Activated naive CD4-positive, alpha-beta T cell treated with anti-CD3 and anti-CD28 coated beads for 36 hours (primary cell): ENCODE measurements at regions of chr13 and their contacts with region 1.

Region 1: DNA sequence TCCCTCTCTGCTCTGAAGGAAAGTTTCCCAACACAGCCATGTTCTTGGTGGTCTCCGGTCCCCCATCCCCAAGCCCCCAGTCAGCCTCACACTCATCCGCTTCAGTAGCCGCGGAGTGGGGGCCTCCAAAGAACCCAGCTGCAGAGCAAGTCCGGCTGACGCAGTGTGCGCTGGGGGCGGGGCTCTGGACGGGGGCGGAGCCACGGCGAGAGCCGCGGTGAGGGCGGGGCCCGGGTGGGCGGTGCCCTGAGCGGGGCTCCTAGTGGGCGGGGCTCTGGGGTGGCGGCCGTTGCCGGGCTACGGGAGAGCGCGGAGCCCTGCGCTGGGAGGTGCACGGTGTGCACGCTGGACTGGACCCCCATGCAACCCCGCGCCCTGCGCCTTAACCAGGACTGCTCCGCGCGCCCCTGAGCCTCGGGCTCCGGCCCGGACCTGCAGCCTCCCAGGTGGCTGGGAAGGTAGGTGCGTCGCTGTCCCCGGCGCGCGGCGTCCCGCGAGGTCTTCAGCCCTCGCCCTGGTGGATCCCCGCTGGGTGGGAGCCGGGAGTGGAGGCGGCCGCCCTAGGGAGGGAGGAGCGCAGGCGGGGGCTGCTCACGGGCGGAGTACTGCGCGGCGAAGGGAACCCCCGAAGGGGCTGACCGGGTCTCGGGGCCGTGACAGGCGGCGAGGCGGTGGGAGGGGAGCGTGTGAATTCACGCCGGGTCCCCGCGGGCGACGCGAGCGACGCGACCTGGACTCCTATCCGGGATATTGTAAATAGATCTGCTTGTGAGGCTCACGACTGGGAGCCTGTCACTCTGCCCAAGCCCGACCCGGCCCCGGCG is 9.1 kb downstream of the TNFRSF19 start:
- DNase-seq: peak; percentile 92
- H3K4me3 Mint-ChIP-seq: peak overlapping the region; percentile 76
- H3K27ac Mint-ChIP-seq: no peak overlapping the region
- H3K4me1 Mint-ChIP-seq: peaks cover 17% of the 10 kb centered on the region
- H3K27me3 Mint-ChIP-seq: peaks cover 38% of the 10 kb centered on the region

Region 2: GRCh38 chr13:23466144-23467002 is 112.9 kb before region 1 on chr13:
- CTCF ChIA-PET with region 1: no interaction called
- intact Hi-C with region 1: loop called (anchors 2 kb)
- DNase-seq: peak; percentile 75
- H3K4me3 Mint-ChIP-seq: peak overlapping the region; percentile 62
- H3K27ac Mint-ChIP-seq: no peak overlapping the region
- H3K4me1 Mint-ChIP-seq: peaks cover 8% of the 10 kb centered on the region
- H3K27me3 Mint-ChIP-seq: no peaks in the 10 kb centered on the region

Region 3: GRCh38 chr13:23695711-23696464 is 116.6 kb after region 1 on chr13:
- CTCF ChIA-PET with region 1: interaction called, 4 read pairs
- intact Hi-C with region 1: loop called (anchors 2 kb)
- DNase-seq: peak; percentile 70
- H3K4me3 Mint-ChIP-seq: peak overlapping the region; percentile 61
- H3K27ac Mint-ChIP-seq: peak overlapping the region; percentile 62
- H3K4me1 Mint-ChIP-seq: peaks cover 10% of the 10 kb centered on the region
- H3K27me3 Mint-ChIP-seq: no peaks in the 10 kb centered on the region

Region 4: DNA sequence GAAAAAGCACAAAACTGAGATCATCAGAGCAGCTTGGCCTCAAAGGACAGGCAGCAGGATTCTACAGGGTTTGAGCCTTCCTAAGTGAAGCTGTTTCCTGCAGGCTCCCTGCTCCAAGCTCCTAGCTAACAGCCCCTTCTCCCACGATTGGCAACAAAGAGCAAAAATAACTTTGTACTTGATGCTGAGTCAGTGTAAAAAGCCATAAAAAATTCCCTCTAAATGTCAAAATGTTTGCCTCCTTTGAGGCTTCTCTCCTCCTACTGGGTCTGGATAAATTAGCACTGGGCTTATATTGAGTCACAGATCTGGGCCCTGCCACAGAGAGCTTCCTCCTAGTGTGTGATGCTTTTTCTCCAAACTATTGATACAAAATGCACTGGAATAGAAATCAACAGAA is 144.2 kb after region 1 on chr13:
- CTCF ChIA-PET with region 1: no interaction called
- intact Hi-C with region 1: no loop called
- DNase-seq: no peak
- H3K4me3 Mint-ChIP-seq: no peak overlapping the region
- H3K27ac Mint-ChIP-seq: no peak overlapping the region
- H3K4me1 Mint-ChIP-seq: peaks cover 10% of the 10 kb centered on the region
- H3K27me3 Mint-ChIP-seq: no peaks in the 10 kb centered on the region

Region 5: DNA sequence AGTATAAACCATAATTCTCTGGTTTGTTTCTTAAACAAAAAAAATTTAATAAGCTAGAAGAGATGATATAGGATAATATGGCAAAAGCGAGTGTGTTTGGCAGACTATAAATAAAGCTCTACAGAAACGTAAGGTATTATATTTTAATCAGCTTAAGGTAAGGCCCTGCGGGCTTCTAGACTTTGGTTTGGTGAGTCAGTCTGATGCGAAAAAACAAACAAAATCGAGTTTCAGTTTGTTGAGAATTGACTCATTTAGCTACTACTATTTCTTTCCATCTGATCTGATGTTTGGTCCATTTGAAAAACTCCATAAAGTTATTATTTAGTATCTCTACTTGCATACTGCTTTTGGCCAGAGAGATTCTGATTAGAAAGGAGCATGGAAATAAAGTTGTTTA is 171.9 kb after region 1 on chr13:
- CTCF ChIA-PET with region 1: no interaction called
- intact Hi-C with region 1: no loop called
- DNase-seq: no peak
- H3K4me3 Mint-ChIP-seq: no peak overlapping the region
- H3K27ac Mint-ChIP-seq: no peak overlapping the region
- H3K4me1 Mint-ChIP-seq: peaks cover 31% of the 10 kb centered on the region
- H3K27me3 Mint-ChIP-seq: no peaks in the 10 kb centered on the region

Region 6: GRCh38 chr13:23822252-23822824 is 243.1 kb after region 1 on chr13:
- CTCF ChIA-PET with region 1: no interaction called
- intact Hi-C with region 1: no loop called
- DNase-seq: no peak
- H3K4me3 Mint-ChIP-seq: no peak overlapping the region
- H3K27ac Mint-ChIP-seq: no peak overlapping the region
- H3K4me1 Mint-ChIP-seq: no peaks in the 10 kb centered on the region
- H3K27me3 Mint-ChIP-seq: no peaks in the 10 kb centered on the region

Region 7: DNA sequence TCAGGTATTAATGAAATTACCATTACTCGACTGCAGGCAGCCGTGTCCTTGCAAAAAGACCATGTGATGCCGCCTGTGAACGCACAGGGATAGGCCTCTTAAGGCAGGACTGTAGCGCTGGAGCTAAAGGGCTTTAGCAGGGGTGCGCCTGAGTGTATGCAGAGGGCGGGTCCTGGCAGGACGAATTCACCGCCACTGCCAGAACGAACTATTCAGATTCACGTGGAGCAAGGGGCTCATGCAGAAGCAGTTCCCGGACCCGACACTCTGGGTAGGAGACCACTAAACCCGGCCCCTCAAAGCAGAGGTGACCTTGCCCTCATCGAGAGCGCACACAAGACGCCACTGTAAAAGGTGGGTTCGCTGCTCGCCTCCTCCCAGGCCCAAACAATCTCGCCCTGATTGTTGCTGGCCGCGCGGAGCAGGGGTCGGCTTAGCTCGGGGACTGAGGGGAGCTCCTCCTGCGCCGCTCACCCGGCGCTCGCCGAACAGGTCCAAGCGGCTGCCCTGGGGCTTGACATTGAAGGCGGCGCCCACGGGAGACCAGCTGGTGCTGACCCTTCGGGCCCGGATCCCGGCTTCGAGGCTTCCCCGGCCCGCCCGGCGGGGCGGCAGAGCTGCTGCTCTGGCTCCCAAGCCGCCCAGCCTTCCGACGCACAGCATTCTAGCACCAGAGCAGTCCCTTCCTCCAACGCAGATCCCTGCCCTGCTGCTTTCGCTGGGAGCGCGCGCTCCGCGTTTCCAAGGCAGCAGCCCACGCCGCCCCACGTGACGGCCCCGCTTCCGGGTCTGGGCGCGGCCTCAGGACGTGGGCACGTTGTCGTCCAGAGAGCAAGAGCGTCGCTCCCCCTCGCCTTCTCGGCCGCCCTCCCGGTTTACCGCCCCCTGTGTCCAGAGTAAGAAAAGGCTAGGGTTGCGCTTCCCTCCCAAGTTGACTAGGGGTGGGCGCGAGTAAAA is 309.7 kb after region 1 on chr13 and contains the start of gene MIPEP:
- CTCF ChIA-PET with region 1: no interaction called
- intact Hi-C with region 1: loop called (anchors 2 kb)
- DNase-seq: peak; percentile 89
- H3K4me3 Mint-ChIP-seq: peak within 1 kb of the TSS; percentile 81
- H3K27ac Mint-ChIP-seq: peak within 1 kb of the TSS; percentile 51
- H3K4me1 Mint-ChIP-seq: peaks cover 24% of the 10 kb centered on the region
- H3K27me3 Mint-ChIP-seq: no peaks in the 10 kb centered on the region
- total RNA-seq, gene MIPEP: 15.4 to 17.0 TPM

Region 8: DNA sequence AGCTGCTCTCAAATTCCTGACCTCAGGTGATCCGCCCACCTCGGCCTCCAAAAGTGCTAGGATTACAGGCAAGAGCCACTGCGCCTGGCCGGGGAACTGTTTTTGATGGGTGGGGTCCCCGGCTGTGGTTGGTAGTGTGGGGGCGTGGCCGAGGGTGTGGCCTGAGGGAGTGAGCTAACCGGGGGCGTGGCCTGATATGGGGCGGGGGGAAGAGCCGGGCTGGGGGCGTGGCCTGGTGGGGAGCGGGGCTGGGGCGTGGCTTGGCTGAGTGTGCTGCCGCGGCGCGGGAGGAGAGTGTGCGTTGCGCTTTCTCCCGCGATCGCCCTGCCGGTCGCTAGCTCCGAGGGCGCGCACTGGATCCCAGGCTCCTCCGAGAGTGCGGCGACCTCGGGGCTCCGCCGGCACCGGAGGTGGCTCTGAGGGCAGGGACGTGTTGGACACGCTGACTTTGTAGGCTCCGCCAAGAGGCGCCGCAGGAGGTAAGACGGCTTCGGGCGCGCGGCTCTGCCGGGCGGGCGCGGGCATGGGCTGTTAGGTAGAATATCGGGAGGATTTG is 581.2 kb after region 1 on chr13 and contains the start of gene SPATA13:
- CTCF ChIA-PET with region 1: no interaction called
- intact Hi-C with region 1: loop called (anchors 1 kb)
- DNase-seq: peak; percentile 95
- H3K4me3 Mint-ChIP-seq: peak within 1 kb of the TSS; percentile 86
- H3K27ac Mint-ChIP-seq: no peak within 1 kb of the TSS
- H3K4me1 Mint-ChIP-seq: peaks cover 12% of the 10 kb centered on the region
- H3K27me3 Mint-ChIP-seq: peaks cover 8% of the 10 kb centered on the region
- total RNA-seq, gene SPATA13: 56.8 to 57.4 TPM